Sigmoid colon (tissue), 7 donors: ENCODE measurements at regions of chr5 and their contacts with region 1.

Region 1: DNA sequence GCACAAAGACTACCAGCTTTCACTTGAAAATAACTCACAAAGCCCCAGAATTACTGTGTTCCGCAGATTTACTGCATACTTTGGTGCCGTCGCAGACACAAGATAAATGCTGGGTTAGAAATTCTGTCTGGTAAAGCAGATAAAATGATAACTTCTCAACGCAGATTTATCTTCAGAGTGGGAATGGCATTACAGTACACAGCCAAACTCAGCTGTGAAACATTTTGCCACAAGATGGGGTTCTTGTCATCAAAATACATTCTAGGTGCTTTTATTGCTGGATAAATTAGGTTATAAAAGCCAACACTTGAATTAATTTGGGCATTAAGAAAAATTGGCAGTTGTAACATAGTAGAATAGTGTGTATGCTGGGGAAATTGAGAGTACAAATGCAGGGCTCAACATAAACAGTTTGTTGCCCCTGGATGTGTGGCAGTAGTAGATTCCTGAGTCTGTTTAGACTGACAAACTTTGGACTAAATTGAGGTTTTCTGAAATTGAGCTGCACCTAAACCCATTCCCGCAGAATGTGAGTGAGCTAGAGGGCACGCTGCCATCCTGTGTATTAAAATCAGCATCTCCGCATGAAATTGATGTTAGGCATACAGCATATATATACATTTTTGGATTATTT is 61.1 kb downstream of the LMNB1 start:
- DNase-seq: no peak
- H3K4me3 ChIP-seq: no peak overlapping the region
- H3K27ac ChIP-seq: no peak overlapping the region
- H3K4me1 ChIP-seq: no peaks in the 10 kb centered on the region
- H3K27me3 ChIP-seq: no peaks in the 10 kb centered on the region
- CTCF ChIP-seq: peak in 3 of 4 experiments; percentile 30 to 53 (median 40)
- EP300 ChIP-seq: no peak
- POLR2A ChIP-seq: no peak

Region 2: DNA sequence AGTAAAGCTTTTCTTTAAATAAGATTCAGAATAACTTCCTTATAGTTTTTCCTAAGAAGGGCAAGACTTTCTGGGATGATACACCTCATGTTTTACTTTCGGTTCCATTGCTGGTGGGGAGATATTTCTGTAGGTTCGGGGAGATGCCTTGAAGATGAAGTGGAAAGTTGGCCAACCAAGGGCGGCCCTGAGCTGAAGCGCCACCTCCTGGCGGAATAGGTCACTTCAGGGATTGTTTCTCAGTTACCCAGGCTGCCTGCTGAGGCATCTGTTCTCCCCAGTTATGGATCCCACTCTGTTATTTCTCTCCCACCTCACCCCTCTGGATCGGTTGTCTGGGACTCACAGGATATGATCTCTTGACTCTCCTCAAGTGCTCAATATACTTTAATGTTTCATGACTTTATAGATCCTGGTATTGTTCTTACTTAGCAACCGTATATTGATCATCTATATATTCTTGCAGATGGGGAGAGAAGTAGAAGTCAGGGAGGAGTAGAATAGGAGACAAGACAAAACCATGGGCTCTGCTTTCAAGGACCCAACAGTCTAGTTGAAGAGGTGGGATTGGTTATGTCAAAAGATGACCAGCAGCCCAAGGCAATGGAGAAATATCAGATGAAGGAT is 475.9 kb after region 1 on chr5:
- intact Hi-C with region 1: loop called (anchors 2 kb)
- DNase-seq: peak; percentile 68
- H3K4me3 ChIP-seq: no peak overlapping the region
- H3K27ac ChIP-seq: no peak overlapping the region
- H3K4me1 ChIP-seq: peaks cover 0 to 6% (median 0%) of the 10 kb centered on the region in 4 donors
- H3K27me3 ChIP-seq: no peaks in the 10 kb centered on the region
- CTCF ChIP-seq: peak in 3 of 4 experiments; percentile 33 to 60 (median 43)
- EP300 ChIP-seq: no peak
- POLR2A ChIP-seq: no peak

Region 3: DNA sequence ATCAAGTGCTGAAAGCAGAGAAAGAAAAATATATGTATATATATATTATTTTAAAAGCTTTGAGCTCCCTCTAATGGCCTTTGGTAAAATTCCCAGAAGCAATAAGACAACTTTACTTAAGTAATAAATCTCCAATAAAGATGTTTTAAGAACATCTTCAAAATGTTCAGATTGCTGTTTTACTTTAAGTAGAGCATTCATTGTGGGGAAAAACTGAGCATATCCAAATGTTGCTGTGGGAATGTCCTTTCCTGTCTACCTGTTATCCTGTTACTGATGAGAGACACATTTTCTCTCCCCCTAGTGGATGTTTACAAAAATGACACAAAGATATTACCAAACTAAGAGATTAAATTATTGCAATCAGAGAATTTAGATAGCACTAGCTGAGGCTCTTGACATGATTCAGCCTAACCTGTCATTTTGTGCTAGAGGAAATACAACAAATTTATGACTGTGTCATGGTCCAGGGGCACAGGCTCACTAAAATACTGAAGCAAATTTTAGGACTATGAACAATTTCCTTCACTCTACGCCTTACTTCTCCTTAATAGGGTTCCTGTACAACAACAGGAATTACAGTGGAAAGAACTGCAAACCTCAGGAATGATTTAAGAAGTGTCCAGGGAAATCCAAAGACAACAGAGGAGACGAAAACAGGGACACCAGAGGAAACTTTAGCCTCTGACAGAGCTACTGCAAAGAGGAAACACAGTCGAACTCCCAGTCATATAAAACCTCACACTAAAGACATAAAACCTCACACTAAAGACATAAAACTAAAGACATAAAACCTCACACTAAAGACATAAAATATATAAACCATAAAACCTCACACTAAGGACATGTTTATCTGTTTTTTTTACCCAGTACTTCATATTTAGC is 655.1 kb after region 1 on chr5:
- intact Hi-C with region 1: loop called (anchors 5 kb)
- DNase-seq: no peak
- H3K4me3 ChIP-seq: no peak overlapping the region
- H3K27ac ChIP-seq: no peak overlapping the region
- H3K4me1 ChIP-seq: no peaks in the 10 kb centered on the region
- H3K27me3 ChIP-seq: peaks cover 0 to 3% (median 0%) of the 10 kb centered on the region in 3 donors
- CTCF ChIP-seq: peak in 3 of 4 experiments; percentile 53 to 61 (median 58)
- EP300 ChIP-seq: no peak
- POLR2A ChIP-seq: no peak